Heart right ventricle (tissue), 16 donors: ENCODE measurements at regions of chr14 and their contacts with region 1.

Region 1: GRCh38 chr14:28515571-28515970 is 251.0 kb upstream of the FOXG1 start:
- DNase-seq: no peak
- ATAC-seq: no peak
- H3K4me3 ChIP-seq: no peak overlapping the region
- H3K27ac ChIP-seq: no peak overlapping the region
- H3K4me1 ChIP-seq: no peaks in the 10 kb centered on the region
- H3K27me3 ChIP-seq: no peaks in the 10 kb centered on the region
- CTCF ChIP-seq: no peak

Region 2: DNA sequence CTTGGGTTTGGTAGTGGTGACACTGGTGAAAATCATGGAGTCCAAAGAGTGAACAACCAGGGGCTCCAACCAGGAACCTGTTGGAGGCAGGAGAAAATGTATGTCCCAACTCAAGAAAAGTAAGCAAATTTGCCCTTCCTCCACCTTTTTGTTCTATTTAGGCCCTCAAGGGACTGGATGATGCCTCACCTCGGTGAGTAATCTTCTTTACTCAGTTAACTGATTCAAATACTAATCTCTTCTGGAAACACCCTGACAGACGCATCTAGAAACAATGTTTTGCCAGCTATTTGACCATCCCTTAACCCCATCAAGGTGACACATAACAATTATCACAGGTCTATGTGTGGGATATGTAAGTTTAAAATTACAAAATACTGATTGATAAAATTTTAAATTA is 21.4 kb before region 1 on chr14:
- intact Hi-C with region 1: loop called in 1 of 10 experiments (anchors 1 kb)
- DNase-seq: no peak
- ATAC-seq: no peak
- H3K4me3 ChIP-seq: no peak overlapping the region
- H3K27ac ChIP-seq: no peak overlapping the region
- H3K4me1 ChIP-seq: no peaks in the 10 kb centered on the region
- H3K27me3 ChIP-seq: no peaks in the 10 kb centered on the region
- CTCF ChIP-seq: no peak